PC-3 (cell line): ENCODE measurements at regions of chr1 and their contacts with region 1.

Region 1: DNA sequence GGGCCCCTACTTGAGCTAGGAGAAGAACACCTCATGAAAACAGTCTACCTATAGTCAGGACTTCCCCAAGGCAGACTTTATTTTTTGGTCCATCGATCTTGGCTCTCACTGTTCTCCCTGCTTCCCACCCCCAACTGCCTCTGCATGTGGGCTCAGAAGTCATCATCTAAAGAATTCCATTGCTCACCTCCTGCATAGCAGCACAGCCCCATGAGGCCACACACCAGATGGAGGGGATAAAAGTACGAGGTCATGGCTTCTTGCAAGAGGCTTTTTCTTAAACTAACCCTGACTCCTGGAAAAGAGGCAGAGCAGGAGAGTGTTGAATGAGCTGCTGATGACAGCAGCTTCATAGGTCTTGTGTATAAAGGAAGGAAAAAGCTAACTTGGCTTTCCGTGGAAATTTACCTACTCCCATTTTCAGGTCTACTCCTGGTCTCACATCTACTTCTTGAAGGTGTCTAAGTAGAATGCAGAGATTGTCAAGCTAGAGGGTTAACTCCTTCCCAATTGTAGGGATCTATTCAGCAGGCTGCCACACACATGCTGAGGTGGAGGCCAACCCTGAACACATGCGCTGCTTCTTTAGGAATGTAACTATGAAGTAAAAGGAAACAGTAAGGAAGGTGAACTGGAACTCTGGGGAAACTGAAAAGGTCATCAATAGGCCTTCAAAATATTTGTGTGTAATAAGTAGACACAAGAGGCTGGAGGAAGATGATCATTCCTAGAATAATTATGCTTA is 18.7 kb downstream of the WNT2B start:
- DNase-seq: no peak
- ATAC-seq: no peak
- H3K4me3 ChIP-seq: no peak overlapping the region
- H3K27ac ChIP-seq: no peak overlapping the region
- H3K4me1 ChIP-seq: peaks cover 22% of the 10 kb centered on the region
- H3K27me3 ChIP-seq: no peaks in the 10 kb centered on the region
- CTCF ChIP-seq: no peak

Region 2: DNA sequence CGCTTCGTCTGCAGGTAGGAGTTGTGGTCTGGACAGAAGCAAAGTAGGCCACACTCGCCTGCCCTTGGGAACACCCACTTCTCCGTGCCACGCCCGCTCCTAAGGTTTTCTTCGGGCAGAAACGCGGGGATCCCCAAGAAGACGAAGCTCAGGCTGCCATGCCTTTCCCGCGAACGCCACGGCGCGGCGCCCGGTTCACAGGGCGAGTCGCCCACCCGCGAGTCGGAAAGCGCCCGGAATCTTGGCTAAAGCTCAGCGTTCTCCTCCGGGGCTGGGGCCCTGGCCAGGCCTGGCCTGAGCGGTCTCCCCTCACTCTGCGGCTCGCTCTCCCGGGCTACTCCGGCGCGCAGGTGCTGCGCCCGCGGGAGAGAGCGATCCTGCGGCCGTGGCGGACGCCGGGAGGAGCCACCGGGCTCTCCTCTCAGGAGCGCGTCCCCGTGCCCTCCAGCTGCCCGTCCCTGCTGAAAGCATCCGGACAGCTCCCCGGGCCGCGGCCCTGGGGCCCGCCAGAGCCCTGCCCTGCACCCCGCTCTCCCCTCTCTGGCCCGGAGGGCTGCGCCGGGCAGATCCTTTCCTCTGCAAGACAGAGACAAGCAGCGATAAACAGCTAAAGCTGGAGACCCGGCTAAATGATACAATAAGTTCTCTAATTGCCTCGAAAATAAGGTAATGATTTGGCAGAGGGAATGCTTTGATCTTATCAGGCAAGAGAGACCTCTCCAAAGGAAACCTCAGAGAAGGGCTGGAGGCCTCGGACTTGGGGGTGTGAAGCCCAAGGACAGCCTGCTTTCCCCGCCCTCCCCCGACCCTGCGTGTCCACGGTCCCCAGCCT is 25.4 kb before region 1 on chr1:
- CTCF ChIA-PET with region 1: interaction called, 9 read pairs
- POLR2A ChIA-PET with region 1: no interaction called
- intact Hi-C with region 1: loop called (anchors 1 kb)
- DNase-seq: peak; percentile 64
- ATAC-seq: peak; percentile 85
- H3K4me3 ChIP-seq: peak overlapping the region; percentile 73
- H3K27ac ChIP-seq: no peak overlapping the region
- H3K4me1 ChIP-seq: no peaks in the 10 kb centered on the region; the same call in 1 of the 2 replicates
- H3K27me3 ChIP-seq: no peaks in the 10 kb centered on the region
- CTCF ChIP-seq: peak; percentile 74

Region 3: GRCh38 chr1:112557385-112557784 is 29.9 kb after region 1 on chr1:
- CTCF ChIA-PET with region 1: no interaction called
- POLR2A ChIA-PET with region 1: interaction called, 41 read pairs
- intact Hi-C with region 1: no loop called
- DNase-seq: no peak
- ATAC-seq: no peak
- H3K4me3 ChIP-seq: no peak overlapping the region
- H3K27ac ChIP-seq: no peak overlapping the region
- H3K4me1 ChIP-seq: no peaks in the 10 kb centered on the region
- H3K27me3 ChIP-seq: no peaks in the 10 kb centered on the region
- CTCF ChIP-seq: no peak